CD4-positive, alpha-beta T cell (primary cell): ENCODE measurements at regions of chr3 and their contacts with region 1.

Region 1: DNA sequence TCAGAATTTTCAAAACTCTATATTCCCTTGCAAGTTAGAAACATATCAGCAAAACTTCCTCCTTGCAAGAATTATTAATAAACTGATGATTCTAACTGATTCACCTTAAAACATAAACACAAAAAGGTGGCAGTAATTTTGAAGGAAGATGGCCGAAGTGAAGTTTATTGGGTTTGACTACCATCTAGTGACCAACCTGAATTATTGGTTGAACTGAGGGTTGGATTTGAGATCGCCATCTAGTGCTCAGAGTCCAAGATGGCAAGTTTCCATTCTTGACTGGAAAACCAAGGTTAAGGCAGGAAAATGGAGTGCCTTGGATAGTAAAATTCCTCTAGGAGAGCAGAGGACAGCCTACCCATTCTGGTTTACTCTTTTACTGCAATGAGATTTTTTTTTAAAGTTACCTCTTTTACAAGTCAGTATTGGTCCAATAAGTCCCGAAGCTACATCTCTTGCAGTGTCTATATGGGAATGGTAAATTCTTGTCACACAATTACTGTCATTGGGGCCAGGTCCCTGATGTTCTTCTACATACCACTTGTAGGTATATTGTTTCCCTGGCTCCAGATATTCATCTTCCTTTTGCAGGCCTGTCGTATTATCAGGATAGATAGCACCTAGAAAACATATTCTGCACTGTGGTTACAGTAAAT is 51.6 kb upstream of the CP start:
- DNase-seq: peak in 4 of 14 experiments; percentile 41 to 82 (median 78)
- ATAC-seq: peak; percentile 82
- H3K4me3 ChIP-seq: no peak overlapping the region
- H3K4me3 Mint-ChIP-seq: no peak overlapping the region
- H3K27ac ChIP-seq: no peak overlapping the region
- H3K27ac Mint-ChIP-seq: no peak overlapping the region
- H3K4me1 ChIP-seq: no peaks in the 10 kb centered on the region
- H3K4me1 Mint-ChIP-seq: peaks cover 11% of the 10 kb centered on the region
- H3K27me3 ChIP-seq: no peaks in the 10 kb centered on the region
- H3K27me3 Mint-ChIP-seq: no peaks in the 10 kb centered on the region
- CTCF ChIP-seq: peak; percentile 88

Region 2: GRCh38 chr3:148861277-148861869 is 411.9 kb before region 1 on chr3:
- CTCF ChIA-PET with region 1: no interaction called
- POLR2A ChIA-PET with region 1: no interaction called
- intact Hi-C with region 1: loop called (anchors 1 to 2 kb)
- DNase-seq: peak in 3 of 14 experiments; percentile 27 to 54 (median 51)
- ATAC-seq: no peak
- H3K4me3 ChIP-seq: no peak overlapping the region
- H3K4me3 Mint-ChIP-seq: no peak overlapping the region
- H3K27ac ChIP-seq: no peak overlapping the region
- H3K27ac Mint-ChIP-seq: no peak overlapping the region
- H3K4me1 ChIP-seq: no peaks in the 10 kb centered on the region
- H3K4me1 Mint-ChIP-seq: no peaks in the 10 kb centered on the region
- H3K27me3 ChIP-seq: peaks cover 5 to 12% of the 10 kb centered on the region in 2 experiments
- H3K27me3 Mint-ChIP-seq: peaks cover 18% of the 10 kb centered on the region
- CTCF ChIP-seq: peak; percentile 74

Region 3: DNA sequence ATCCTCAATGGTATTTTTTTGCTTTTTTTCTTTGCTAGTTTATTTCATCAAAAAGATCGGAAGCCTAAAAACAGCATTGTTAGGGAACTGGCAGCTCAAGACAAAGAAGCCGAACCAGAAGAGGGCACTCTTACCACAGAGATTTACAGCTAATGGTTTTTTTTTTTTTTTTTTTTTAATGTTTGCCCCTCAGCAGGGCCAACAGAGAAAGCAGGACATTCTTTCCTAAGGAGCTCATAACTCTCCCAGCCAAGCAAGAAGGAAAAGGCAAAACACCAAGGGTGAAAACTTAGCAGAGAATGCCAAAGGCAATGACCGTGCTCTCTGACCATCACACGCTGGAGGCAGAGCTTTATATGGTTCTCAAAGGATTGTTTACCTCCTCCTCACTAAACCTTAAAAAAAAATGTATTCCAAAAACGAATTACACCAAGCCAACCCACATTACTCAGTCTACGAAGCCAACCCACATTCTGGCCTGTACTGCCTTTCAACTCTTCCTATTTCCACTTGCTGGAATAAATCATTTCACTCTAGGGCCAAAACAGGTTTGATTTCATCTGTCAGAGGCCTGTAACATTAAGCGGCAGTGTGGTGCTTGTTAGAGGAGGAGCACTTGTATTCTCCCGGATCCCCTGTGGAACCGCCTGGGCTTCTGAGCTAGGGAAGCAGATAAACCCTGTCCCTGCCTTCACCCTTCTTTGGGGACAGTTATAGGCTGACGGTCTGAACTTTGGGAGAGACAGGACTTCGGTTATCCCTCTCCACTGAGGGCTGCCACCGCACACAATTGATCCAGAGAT is 317.5 kb before region 1 on chr3:
- CTCF ChIA-PET with region 1: interaction called, 5 read pairs
- POLR2A ChIA-PET with region 1: no interaction called
- intact Hi-C with region 1: loop called (anchors 1 to 2 kb)
- DNase-seq: peak in 5 of 14 experiments; percentile 6 to 65 (median 57)
- ATAC-seq: no peak
- H3K4me3 ChIP-seq: no peak overlapping the region
- H3K4me3 Mint-ChIP-seq: no peak overlapping the region
- H3K27ac ChIP-seq: no peak overlapping the region
- H3K27ac Mint-ChIP-seq: no peak overlapping the region
- H3K4me1 ChIP-seq: no peaks in the 10 kb centered on the region
- H3K4me1 Mint-ChIP-seq: no peaks in the 10 kb centered on the region
- H3K27me3 ChIP-seq: no peaks in the 10 kb centered on the region
- H3K27me3 Mint-ChIP-seq: no peaks in the 10 kb centered on the region
- CTCF ChIP-seq: peak; percentile 38

Region 4: DNA sequence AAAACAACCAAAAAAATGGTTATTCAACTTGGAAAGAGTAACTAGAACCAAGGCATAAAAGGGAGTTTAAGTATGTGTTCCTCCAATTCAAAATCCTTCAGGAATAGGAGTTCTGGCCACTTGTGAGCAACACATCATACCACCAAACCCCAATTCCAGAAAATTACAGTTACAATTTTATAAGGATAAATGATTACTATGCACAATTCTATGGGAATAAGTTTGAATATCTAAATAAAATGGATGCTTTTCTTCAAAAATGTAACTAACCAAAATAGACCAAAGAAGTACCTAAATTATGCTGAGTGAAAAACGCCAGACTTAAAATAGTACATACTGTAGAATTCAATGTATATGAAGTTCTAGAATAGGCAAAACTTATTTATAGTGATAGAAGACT is 191.5 kb before region 1 on chr3:
- CTCF ChIA-PET with region 1: no interaction called
- POLR2A ChIA-PET with region 1: no interaction called
- intact Hi-C with region 1: no loop called
- DNase-seq: no peak
- ATAC-seq: no peak
- H3K4me3 ChIP-seq: no peak overlapping the region
- H3K4me3 Mint-ChIP-seq: no peak overlapping the region
- H3K27ac ChIP-seq: no peak overlapping the region
- H3K27ac Mint-ChIP-seq: no peak overlapping the region
- H3K4me1 ChIP-seq: peaks cover 10% of the 10 kb centered on the region
- H3K4me1 Mint-ChIP-seq: peaks cover 41% of the 10 kb centered on the region
- H3K27me3 ChIP-seq: no peaks in the 10 kb centered on the region
- H3K27me3 Mint-ChIP-seq: no peaks in the 10 kb centered on the region
- CTCF ChIP-seq: no peak

Region 5: GRCh38 chr3:149310796-149311534 is 37.7 kb after region 1 on chr3:
- CTCF ChIA-PET with region 1: no interaction called
- POLR2A ChIA-PET with region 1: no interaction called
- intact Hi-C with region 1: no loop called
- DNase-seq: no peak
- ATAC-seq: no peak
- H3K4me3 ChIP-seq: no peak overlapping the region
- H3K4me3 Mint-ChIP-seq: no peak overlapping the region
- H3K27ac ChIP-seq: no peak overlapping the region
- H3K27ac Mint-ChIP-seq: no peak overlapping the region
- H3K4me1 ChIP-seq: no peaks in the 10 kb centered on the region
- H3K4me1 Mint-ChIP-seq: no peaks in the 10 kb centered on the region
- H3K27me3 ChIP-seq: no peaks in the 10 kb centered on the region
- H3K27me3 Mint-ChIP-seq: peaks cover 31% of the 10 kb centered on the region
- CTCF ChIP-seq: no peak